Activated CD4-positive, alpha-beta T cell treated with anti-CD3 and anti-CD28 coated beads, Interleukin-2, amount 10 ng/mL, durations not matched to agents 24 days and 14 days (primary cell): ENCODE measurements at regions of chr9 and their contacts with region 1.

Region 1: GRCh38 chr9:104093647-104094533 is at the start of gene SMC2:
- DNase-seq: peak; percentile 98
- H3K4me3 Mint-ChIP-seq: peak within 1 kb of the TSS; percentile 98
- H3K27ac Mint-ChIP-seq: peak within 1 kb of the TSS; percentile 100
- H3K4me1 Mint-ChIP-seq: peaks cover 34% of the 10 kb centered on the region
- H3K27me3 Mint-ChIP-seq: no peaks in the 10 kb centered on the region
- total RNA-seq, gene SMC2: 57.2 and 60.8 TPM in 2 replicates

Region 2: GRCh38 chr9:103798620-103799019 is 295.3 kb before region 1 on chr9:
- intact Hi-C with region 1: loop called (anchors 2 kb)
- DNase-seq: peak; percentile 62
- H3K4me3 Mint-ChIP-seq: no peak overlapping the region
- H3K27ac Mint-ChIP-seq: no peak overlapping the region
- H3K4me1 Mint-ChIP-seq: peaks cover 5% of the 10 kb centered on the region
- H3K27me3 Mint-ChIP-seq: no peaks in the 10 kb centered on the region

Region 3: GRCh38 chr9:104110509-104110908 is 16.6 kb after region 1 on chr9:
- intact Hi-C with region 1: loop called (anchors 2 kb)
- DNase-seq: no peak
- H3K4me3 Mint-ChIP-seq: no peak overlapping the region
- H3K27ac Mint-ChIP-seq: no peak overlapping the region
- H3K4me1 Mint-ChIP-seq: no peaks in the 10 kb centered on the region
- H3K27me3 Mint-ChIP-seq: no peaks in the 10 kb centered on the region

Region 4: DNA sequence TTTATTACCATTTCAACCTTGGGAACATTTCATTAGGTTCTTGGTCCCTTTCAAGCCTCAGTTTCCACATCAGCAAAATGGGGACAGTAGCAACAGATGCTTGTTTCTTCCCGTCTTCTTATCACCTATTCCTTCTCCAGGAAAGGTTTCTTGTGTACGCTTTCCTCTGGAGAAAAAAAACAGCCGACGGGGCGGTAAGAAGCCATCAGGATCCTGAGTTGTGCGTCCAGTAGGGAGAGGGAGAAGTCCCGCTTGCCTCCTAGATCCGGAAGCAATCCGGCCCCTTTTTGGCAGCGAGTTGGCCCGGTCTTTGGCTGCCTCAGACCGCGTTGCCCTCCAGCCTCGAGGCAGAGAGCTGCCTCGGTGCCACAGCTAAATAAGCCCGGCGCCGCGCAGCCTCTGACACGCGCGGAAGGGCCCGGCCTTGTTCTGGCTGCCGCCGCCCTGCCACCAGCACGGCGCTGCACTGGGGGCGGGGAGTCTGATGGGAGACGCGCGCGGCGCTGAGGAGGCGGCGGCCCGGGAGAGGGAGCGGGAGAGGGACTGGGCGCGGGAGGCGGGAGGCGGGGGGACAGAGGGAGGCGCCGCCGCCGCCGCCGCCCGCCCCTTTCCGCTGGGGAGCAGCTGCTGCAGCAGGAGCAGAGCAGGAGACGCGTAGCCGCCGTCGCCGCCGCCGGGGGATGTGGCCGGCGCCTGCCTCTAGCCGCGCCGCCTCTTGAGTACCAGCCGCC is 1150.3 kb after region 1 on chr9 and contains the start of gene SLC44A1:
- intact Hi-C with region 1: loop called (anchors 10 kb)
- DNase-seq: peak; percentile 98
- H3K4me3 Mint-ChIP-seq: peak within 1 kb of the TSS; percentile 88
- H3K27ac Mint-ChIP-seq: peak within 1 kb of the TSS; percentile 74
- H3K4me1 Mint-ChIP-seq: peaks cover 22% of the 10 kb centered on the region
- H3K27me3 Mint-ChIP-seq: peaks cover 73% of the 10 kb centered on the region
- total RNA-seq, gene SLC44A1: 2.5 and 2.9 TPM in 2 replicates

Region 5: GRCh38 chr9:105694190-105694847 is 1600.4 kb after region 1 on chr9 and contains the start of gene TMEM38B:
- intact Hi-C with region 1: loop called (anchors 2 kb)
- DNase-seq: peak; percentile 95
- H3K4me3 Mint-ChIP-seq: peak within 1 kb of the TSS; percentile 82
- H3K27ac Mint-ChIP-seq: peak within 1 kb of the TSS; percentile 63
- H3K4me1 Mint-ChIP-seq: peaks cover 16% of the 10 kb centered on the region
- H3K27me3 Mint-ChIP-seq: peaks cover 26% of the 10 kb centered on the region
- total RNA-seq, gene TMEM38B: 10.9 and 12.0 TPM in 2 replicates